GM12878 (cell line): ENCODE measurements at regions of chr9 and their contacts with region 1.

Region 1: GRCh38 chr9:16484744-16485143 is 385.7 kb downstream of the BNC2 start:
- DNase-seq: no peak
- ATAC-seq: no peak; the same call in 1 of the 3 replicates
- H3K4me3 ChIP-seq: no peak overlapping the region
- H3K27ac ChIP-seq: no peak overlapping the region
- H3K4me1 ChIP-seq: no peaks in the 10 kb centered on the region
- H3K27me3 ChIP-seq: no peaks in the 10 kb centered on the region
- CTCF ChIP-seq: no peak
- EP300 ChIP-seq: no peak
- POLR2A ChIP-seq: no peak
- RAD21 ChIP-seq: no peak

Region 2: GRCh38 chr9:16450578-16450977 is 34.2 kb before region 1 on chr9:
- CTCF ChIA-PET with region 1: no interaction called
- POLR2A ChIA-PET with region 1: interaction called, 3 read pairs
- RAD21 ChIA-PET with region 1: interaction called, 6 read pairs
- SMC1A ChIA-PET with region 1: interaction called, 16 read pairs
- in situ Hi-C with region 1: no loop called
- intact Hi-C with region 1: loop called (anchors 5 kb)
- DNase-seq: no peak
- ATAC-seq: peak; percentile 74
- H3K4me3 ChIP-seq: no peak overlapping the region
- H3K27ac ChIP-seq: no peak overlapping the region
- H3K4me1 ChIP-seq: no peaks in the 10 kb centered on the region
- H3K27me3 ChIP-seq: no peaks in the 10 kb centered on the region
- CTCF ChIP-seq: no peak
- EP300 ChIP-seq: no peak
- POLR2A ChIP-seq: no peak
- RAD21 ChIP-seq: no peak

Region 3: GRCh38 chr9:16458696-16459420 is 25.9 kb before region 1 on chr9:
- CTCF ChIA-PET with region 1: interaction called, 7 read pairs
- POLR2A ChIA-PET with region 1: interaction called, 3 read pairs
- RAD21 ChIA-PET with region 1: interaction called, 11 read pairs
- SMC1A ChIA-PET with region 1: interaction called, 16 read pairs
- in situ Hi-C with region 1: no loop called
- intact Hi-C with region 1: loop called (anchors 5 kb)
- DNase-seq: peak; percentile 76
- ATAC-seq: peak; percentile 80
- H3K4me3 ChIP-seq: no peak overlapping the region
- H3K27ac ChIP-seq: peak overlapping the region; percentile 29
- H3K4me1 ChIP-seq: peaks cover 8% of the 10 kb centered on the region; the same call in 1 of the 2 replicates
- H3K27me3 ChIP-seq: no peaks in the 10 kb centered on the region
- CTCF ChIP-seq: no peak
- EP300 ChIP-seq: no peak; a peak in 2 of 4 replicates
- POLR2A ChIP-seq: no peak
- RAD21 ChIP-seq: no peak

Region 4: DNA sequence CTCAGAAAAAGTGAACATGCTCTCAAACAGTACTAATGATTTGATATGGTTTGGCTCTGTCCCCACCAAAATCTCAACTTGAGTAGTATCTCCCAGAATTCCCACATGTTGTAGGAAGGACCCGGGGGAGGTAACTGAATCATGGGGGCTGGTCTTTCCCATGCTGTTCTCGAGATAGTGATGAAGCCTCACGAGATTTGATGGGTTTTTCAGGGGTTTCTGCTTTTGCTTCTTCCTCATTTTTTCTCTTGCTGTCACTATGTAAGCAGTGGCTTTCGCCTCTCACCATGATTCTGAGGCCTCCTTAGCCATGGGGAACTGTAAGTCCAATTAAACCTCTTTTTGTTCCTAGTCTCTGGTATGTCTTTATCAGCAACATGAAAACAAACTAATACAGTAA is 15.6 kb before region 1 on chr9:
- CTCF ChIA-PET with region 1: interaction called, 8 read pairs
- POLR2A ChIA-PET with region 1: interaction called, 7 read pairs
- RAD21 ChIA-PET with region 1: interaction called, 4 read pairs
- SMC1A ChIA-PET with region 1: interaction called, 13 read pairs
- in situ Hi-C with region 1: no loop called
- intact Hi-C with region 1: no loop called
- DNase-seq: no peak
- ATAC-seq: peak; percentile 74
- H3K4me3 ChIP-seq: no peak overlapping the region
- H3K27ac ChIP-seq: no peak overlapping the region
- H3K4me1 ChIP-seq: no peaks in the 10 kb centered on the region
- H3K27me3 ChIP-seq: no peaks in the 10 kb centered on the region
- CTCF ChIP-seq: no peak
- EP300 ChIP-seq: no peak
- POLR2A ChIP-seq: no peak
- RAD21 ChIP-seq: no peak

Region 5: GRCh38 chr9:16509997-16510396 is 25.3 kb after region 1 on chr9:
- CTCF ChIA-PET with region 1: interaction called, 3 read pairs
- POLR2A ChIA-PET with region 1: interaction called, 5 read pairs
- RAD21 ChIA-PET with region 1: interaction called, 11 read pairs
- SMC1A ChIA-PET with region 1: interaction called, 5 read pairs
- in situ Hi-C with region 1: no loop called
- intact Hi-C with region 1: no loop called
- DNase-seq: no peak
- ATAC-seq: peak; percentile 69
- H3K4me3 ChIP-seq: no peak overlapping the region
- H3K27ac ChIP-seq: no peak overlapping the region
- H3K4me1 ChIP-seq: no peaks in the 10 kb centered on the region
- H3K27me3 ChIP-seq: no peaks in the 10 kb centered on the region
- CTCF ChIP-seq: no peak
- EP300 ChIP-seq: no peak
- POLR2A ChIP-seq: no peak
- RAD21 ChIP-seq: no peak

Region 6: GRCh38 chr9:16521868-16522411 is 37.2 kb after region 1 on chr9:
- CTCF ChIA-PET with region 1: no interaction called
- POLR2A ChIA-PET with region 1: interaction called, 5 read pairs
- RAD21 ChIA-PET with region 1: interaction called, 19 read pairs
- SMC1A ChIA-PET with region 1: interaction called, 14 read pairs
- in situ Hi-C with region 1: no loop called
- intact Hi-C with region 1: no loop called
- DNase-seq: no peak
- ATAC-seq: no peak
- H3K4me3 ChIP-seq: no peak overlapping the region
- H3K27ac ChIP-seq: no peak overlapping the region
- H3K4me1 ChIP-seq: no peaks in the 10 kb centered on the region
- H3K27me3 ChIP-seq: no peaks in the 10 kb centered on the region
- CTCF ChIP-seq: no peak
- EP300 ChIP-seq: no peak
- POLR2A ChIP-seq: no peak
- RAD21 ChIP-seq: no peak

Region 7: GRCh38 chr9:16543686-16544085 is 58.9 kb after region 1 on chr9:
- CTCF ChIA-PET with region 1: interaction called, 3 read pairs
- POLR2A ChIA-PET with region 1: no interaction called
- RAD21 ChIA-PET with region 1: interaction called, 5 read pairs
- SMC1A ChIA-PET with region 1: interaction called, 11 read pairs
- in situ Hi-C with region 1: no loop called
- intact Hi-C with region 1: no loop called
- DNase-seq: no peak
- ATAC-seq: no peak
- H3K4me3 ChIP-seq: no peak overlapping the region
- H3K27ac ChIP-seq: no peak overlapping the region
- H3K4me1 ChIP-seq: no peaks in the 10 kb centered on the region
- H3K27me3 ChIP-seq: no peaks in the 10 kb centered on the region
- CTCF ChIP-seq: no peak
- EP300 ChIP-seq: no peak
- POLR2A ChIP-seq: no peak
- RAD21 ChIP-seq: no peak

Region 8: GRCh38 chr9:17219261-17219660 is 734.5 kb after region 1 on chr9:
- CTCF ChIA-PET with region 1: no interaction called
- POLR2A ChIA-PET with region 1: no interaction called
- RAD21 ChIA-PET with region 1: no interaction called
- SMC1A ChIA-PET with region 1: no interaction called
- in situ Hi-C with region 1: no loop called
- intact Hi-C with region 1: no loop called
- DNase-seq: no peak
- ATAC-seq: no peak
- H3K4me3 ChIP-seq: no peak overlapping the region
- H3K27ac ChIP-seq: no peak overlapping the region
- H3K4me1 ChIP-seq: no peaks in the 10 kb centered on the region
- H3K27me3 ChIP-seq: no peaks in the 10 kb centered on the region
- CTCF ChIP-seq: no peak
- EP300 ChIP-seq: no peak
- POLR2A ChIP-seq: no peak
- RAD21 ChIP-seq: no peak